Mucosa of descending colon (tissue), 3 donors: ENCODE measurements at regions of chr1 and their contacts with region 1.

Region 1: DNA sequence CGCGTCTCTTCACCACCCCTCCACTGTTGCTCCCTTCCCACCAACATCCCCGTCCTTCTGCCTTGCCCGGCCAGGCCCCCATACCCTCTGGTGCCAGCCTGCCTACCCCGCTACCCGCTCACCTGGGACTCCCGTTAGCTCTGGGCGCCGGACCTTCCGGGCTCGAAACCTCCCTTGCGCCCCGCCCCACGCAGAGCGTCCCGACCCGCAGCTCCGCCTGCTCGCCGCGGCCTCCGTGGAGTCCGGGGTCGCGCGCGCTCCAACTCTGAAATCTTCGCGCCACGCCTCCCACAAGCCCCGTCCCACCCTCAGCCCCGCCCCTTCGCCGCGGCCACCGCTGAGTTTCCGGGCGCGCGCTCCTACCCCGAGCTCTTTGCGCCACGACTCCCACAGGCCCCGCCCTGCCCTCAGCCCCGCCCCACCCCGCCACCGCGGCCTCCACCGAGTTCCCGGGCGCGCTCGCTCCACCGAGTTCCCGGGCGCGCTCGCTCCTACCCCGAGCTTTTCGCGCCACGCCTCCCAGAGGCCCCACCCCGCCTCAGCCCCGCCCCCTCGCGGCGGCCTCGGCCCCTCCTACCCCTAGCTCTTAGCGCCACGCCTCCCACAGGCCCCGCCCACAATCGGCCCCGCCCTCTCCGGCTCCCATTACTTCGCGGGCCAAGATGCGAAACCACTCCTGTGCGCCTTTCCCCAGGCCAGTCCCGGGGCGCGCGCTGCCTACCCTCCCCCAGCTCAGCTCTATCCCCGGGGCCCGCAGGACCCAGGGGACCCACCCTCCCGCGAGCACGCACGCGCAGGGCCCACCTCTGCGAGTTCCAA is at the start of gene IFT25:
- DNase-seq: peak; percentile 98 to 99 (median 99)
- ATAC-seq: peak; percentile 94
- H3K4me3 ChIP-seq: peak within 1 kb of the TSS; percentile 47
- H3K4me1 ChIP-seq: peaks cover 22% of the 10 kb centered on the region
- CTCF ChIP-seq: no peak
- total RNA-seq, gene IFT25: 19.8 to 22.6 (median 19.9) TPM

Region 2: GRCh38 chr1:53752281-53752680 is 193.4 kb before region 1 on chr1:
- intact Hi-C with region 1: no loop called
- DNase-seq: no peak
- ATAC-seq: no peak
- H3K4me3 ChIP-seq: no peak overlapping the region
- H3K4me1 ChIP-seq: no peaks in the 10 kb centered on the region
- CTCF ChIP-seq: no peak

Region 3: DNA sequence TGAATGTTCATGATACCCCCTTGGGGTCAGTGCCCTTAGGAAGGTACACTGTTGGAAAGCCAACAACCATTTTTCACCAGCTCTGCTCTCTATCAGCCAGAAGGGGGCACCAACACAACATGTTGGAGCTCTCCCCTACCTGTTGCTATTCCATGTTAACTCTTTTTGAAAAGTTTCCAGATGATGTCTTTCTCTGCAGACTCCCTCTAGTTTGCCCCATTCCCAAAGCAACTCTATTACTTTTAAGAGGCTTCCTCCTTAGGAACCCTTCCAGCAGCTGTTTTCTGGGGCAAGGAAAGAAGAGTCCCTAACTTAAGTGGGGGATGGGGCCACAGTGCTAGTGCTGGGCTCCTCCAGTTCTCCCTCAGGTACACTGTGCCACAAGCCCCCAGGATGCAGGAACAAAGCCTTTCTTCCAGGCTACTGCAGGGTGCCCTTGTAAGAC is 84.7 kb before region 1 on chr1:
- intact Hi-C with region 1: loop called in 1 of 2 experiments (anchors 2 kb)
- DNase-seq: peak in 1 of 3 donors; percentile 64
- ATAC-seq: peak; percentile 81
- H3K4me3 ChIP-seq: no peak overlapping the region
- H3K4me1 ChIP-seq: no peaks in the 10 kb centered on the region
- CTCF ChIP-seq: peak; percentile 49

Region 4: GRCh38 chr1:53889304-53890298 is 56.0 kb before region 1 on chr1 and contains the start of gene YIPF1:
- intact Hi-C with region 1: loop called in 1 of 2 experiments (anchors 10 kb)
- DNase-seq: peak; percentile 93 to 96 (median 95)
- ATAC-seq: peak; percentile 100
- H3K4me3 ChIP-seq: peak within 1 kb of the TSS; percentile 82
- H3K4me1 ChIP-seq: no peaks in the 10 kb centered on the region
- CTCF ChIP-seq: no peak
- total RNA-seq, gene YIPF1: 23.4 to 37.3 (median 30.6) TPM